ENCODE measurements at regions of chr22 and their contacts with region 1.

Region 1: GRCh38 chr22:19730655-19731360 is 7.5 kb downstream of the GP1BB start:
- DNase-seq: no peak
- ATAC-seq: peak; percentile 97
- H3K4me3 ChIP-seq: peak overlapping the region; percentile 29; the same call in 1 of the 2 replicates
- H3K27ac ChIP-seq: no peak overlapping the region
- H3K4me1 ChIP-seq: no peaks in the 10 kb centered on the region
- H3K27me3 ChIP-seq: no peaks in the 10 kb centered on the region
- CTCF ChIP-seq: peak; percentile 85 to 96 (median 89)
- EP300 ChIP-seq: no peak
- POLR2A ChIP-seq: no peak
- RAD21 ChIP-seq: peak; percentile 96

Region 2: DNA sequence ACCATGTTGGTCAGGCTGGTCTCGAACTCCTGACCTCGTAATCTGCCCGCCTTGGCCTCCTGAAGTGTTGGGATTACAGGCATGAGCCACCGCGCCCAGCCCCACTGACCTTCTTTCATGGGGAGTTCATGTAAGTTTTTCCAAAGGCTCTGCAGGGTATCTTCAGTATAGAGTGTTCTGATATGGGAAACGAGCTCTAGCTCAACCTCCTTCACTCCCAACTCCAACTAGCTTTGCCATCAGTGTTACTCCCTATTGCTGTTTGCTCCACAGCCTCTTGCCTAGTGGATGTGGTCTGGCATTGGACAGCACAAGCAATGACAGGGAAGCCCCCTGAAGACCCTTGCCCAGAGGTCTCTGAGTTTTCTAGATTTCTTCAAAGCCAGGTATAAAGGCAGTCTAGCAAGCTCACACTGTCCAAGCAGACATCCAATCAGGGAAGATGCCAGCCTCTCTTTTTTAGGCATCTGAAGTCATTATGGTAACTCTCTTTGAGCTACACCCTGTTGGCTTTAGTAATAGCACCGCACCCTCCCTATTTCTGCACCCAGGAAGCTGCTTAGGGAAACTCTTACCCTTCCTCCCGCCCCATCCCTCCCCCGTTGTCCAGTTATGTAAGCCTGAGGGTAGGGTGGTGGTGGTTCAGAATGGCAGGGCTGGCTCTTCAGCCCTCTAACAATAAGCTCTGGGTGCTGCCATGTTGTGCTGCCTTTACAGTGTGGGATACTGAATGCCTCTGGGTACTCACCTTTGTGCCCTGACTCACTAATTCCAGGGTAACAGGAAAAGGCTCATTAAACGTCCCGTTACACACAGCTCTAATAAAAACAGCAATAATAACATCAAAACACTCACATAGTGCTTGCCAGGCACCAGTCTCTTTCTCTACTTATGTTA is 165.2 kb before region 1 on chr22:
- CTCF ChIA-PET with region 1: no interaction called
- POLR2A ChIA-PET with region 1: no interaction called
- RAD21 ChIA-PET with region 1: no interaction called
- SMC1A ChIA-PET with region 1: no interaction called
- in situ Hi-C with region 1: no loop called
- intact Hi-C with region 1: no loop called
- DNase-seq: no peak
- ATAC-seq: no peak
- H3K4me3 ChIP-seq: no peak overlapping the region
- H3K27ac ChIP-seq: no peak overlapping the region
- H3K4me1 ChIP-seq: no peaks in the 10 kb centered on the region
- H3K27me3 ChIP-seq: no peaks in the 10 kb centered on the region
- CTCF ChIP-seq: no peak
- EP300 ChIP-seq: no peak
- POLR2A ChIP-seq: no peak
- RAD21 ChIP-seq: no peak

Region 3: DNA sequence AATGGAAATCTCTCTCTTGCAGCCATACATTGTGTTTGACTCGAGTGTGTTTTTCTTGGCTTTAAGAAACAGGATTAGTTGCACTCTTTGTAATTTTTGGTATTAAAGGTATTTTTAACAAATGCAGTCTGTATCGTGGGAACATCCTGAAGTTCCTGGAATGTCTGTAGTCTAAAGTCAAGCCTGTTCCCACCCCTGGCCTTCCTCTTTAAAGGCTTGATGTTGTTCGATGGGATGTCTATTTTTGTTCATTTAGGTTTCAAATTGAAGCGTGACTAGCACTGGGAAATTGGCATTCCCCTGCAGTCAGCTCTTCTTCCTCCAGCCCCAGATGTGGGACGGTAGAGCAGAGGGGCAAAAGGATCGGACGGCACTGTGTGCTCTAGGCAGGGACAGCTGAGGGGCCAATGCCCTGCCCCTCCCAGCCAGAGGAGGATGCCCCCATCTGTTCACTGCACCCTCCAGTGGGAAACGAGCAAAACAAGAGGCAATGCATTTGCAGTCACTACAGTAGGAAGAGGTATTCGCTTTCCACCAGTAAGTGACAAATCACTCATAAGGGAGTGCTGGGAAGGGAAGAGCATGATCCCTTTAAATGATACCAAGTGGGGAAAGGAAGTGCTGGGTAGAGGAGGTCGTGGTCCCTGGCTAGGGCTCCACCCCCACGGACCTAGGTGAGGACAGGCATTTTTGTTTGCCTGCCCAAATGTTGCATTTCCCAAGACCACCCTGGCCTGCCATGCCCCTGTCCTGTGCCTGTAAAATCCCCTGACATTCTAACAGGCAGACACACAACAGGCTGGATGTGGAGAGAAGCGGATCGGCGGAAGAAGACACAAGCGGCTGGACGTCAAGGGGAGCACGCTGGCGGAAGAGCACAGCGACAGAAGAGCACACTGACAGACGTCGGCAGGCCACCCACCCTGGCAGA is 63.9 kb before region 1 on chr22:
- CTCF ChIA-PET with region 1: no interaction called
- POLR2A ChIA-PET with region 1: no interaction called
- RAD21 ChIA-PET with region 1: no interaction called
- SMC1A ChIA-PET with region 1: no interaction called
- in situ Hi-C with region 1: no loop called
- intact Hi-C with region 1: no loop called
- DNase-seq: no peak
- ATAC-seq: no peak
- H3K4me3 ChIP-seq: no peak overlapping the region
- H3K27ac ChIP-seq: no peak overlapping the region
- H3K4me1 ChIP-seq: no peaks in the 10 kb centered on the region
- H3K27me3 ChIP-seq: no peaks in the 10 kb centered on the region; a peak in 2 of 4 replicates
- CTCF ChIP-seq: no peak
- EP300 ChIP-seq: no peak
- POLR2A ChIP-seq: no peak
- RAD21 ChIP-seq: no peak

Region 4: DNA sequence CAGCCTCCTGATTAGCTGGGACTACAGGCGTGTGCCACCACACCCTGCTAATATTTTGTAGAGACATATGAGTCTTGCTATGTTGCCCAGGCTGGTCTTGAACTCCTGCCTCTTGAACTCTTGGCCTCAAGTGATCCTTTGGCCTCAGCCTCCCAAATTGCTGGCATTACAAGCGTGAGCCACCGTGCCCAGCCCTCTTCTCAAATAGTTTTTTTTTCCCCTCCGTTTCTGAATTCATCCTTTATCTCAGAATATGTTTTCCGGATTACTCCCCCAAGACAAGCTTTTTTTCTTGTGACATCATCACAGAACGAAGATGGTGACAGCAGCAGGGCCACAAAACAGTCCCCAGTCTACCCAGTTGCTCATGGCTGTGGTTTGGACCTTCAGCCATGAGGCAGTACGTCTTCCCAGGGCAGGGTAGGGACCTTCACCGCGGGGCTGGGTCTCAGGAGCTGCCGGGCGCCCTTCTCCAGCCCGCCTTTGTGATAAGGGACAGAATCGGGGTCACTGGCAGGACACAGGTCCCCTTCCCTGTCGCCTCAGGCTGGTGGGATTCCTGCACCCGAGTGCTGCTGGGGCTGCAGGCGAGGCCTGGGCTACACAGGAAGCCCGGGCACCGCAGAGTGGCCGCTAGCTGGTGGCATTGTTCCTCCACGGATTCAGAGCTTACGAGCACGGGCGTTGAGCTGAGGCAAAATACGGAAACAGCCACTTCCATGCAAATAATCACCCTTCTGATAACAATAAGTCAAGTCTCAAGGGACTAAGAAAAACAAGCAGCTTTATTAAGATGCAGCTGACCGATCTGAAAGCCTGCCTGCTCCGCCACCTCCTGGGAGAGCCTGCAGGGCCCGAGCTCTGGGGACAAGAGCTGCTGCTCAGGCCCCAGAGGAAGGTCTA is 41.9 kb after region 1 on chr22:
- CTCF ChIA-PET with region 1: interaction called, 9 read pairs
- POLR2A ChIA-PET with region 1: no interaction called
- RAD21 ChIA-PET with region 1: interaction called, 10 read pairs
- SMC1A ChIA-PET with region 1: interaction called, 5 read pairs
- in situ Hi-C with region 1: no loop called
- intact Hi-C with region 1: no loop called
- DNase-seq: peak; percentile 61
- ATAC-seq: peak; percentile 90
- H3K4me3 ChIP-seq: no peak overlapping the region
- H3K27ac ChIP-seq: no peak overlapping the region
- H3K4me1 ChIP-seq: peaks cover 9% of the 10 kb centered on the region
- H3K27me3 ChIP-seq: peaks cover 0 to 5% of the 10 kb centered on the region in 2 experiments; a peak in 3 of 4 replicates
- CTCF ChIP-seq: peak; percentile 15 to 42 (median 26); a peak in 3 of 6 replicates
- EP300 ChIP-seq: peak in 1 of 2 experiments; percentile 37; a peak in 1 of 4 replicates
- POLR2A ChIP-seq: no peak
- RAD21 ChIP-seq: no peak

Region 5: DNA sequence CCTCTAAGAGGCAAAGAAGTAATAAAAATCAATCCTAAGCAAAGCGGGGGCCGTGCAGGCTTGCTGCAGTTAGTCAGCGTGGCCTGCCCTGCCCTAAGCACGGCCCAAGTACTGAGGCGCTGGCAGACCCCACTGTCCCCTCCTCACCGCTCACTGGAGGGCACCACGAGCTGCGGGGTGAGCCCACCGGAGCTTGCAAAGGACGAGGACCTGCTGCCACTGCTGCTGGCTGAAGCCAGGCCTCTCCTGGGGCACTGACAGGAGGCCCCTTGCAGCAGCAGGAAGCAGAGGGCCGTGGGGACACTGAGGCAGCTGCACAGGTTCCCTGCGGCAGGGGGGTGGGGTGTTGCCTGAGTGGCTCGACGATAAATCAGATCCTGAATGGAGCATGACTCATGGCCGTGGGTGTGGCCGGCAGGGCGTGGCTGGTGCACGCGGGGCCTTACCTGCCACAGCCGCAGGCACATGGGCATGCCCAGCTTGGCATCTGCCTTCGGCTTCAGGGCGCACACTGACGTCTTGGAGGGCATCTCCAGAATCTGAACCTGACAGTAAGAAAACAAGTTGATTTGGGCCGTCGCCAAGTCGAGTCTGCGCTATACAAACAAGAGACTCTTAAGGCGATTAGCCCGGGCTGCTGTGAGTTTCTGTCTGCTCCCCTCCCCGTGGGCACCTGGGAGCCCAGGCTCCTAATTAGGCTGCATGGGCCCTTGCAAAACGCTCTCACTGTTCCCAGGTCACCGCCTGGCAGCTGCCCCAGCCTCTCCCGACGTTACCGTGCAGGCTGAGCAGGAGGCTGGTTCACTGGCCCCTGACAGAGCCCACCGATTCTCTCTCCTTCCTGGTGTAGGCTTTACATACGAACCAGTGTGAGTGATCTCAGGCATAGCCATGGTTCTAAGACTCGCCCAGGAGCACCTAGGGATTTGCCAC is 75.7 kb after region 1 on chr22:
- CTCF ChIA-PET with region 1: no interaction called
- POLR2A ChIA-PET with region 1: no interaction called
- RAD21 ChIA-PET with region 1: no interaction called
- SMC1A ChIA-PET with region 1: no interaction called
- in situ Hi-C with region 1: no loop called
- intact Hi-C with region 1: no loop called
- DNase-seq: no peak
- ATAC-seq: no peak
- H3K4me3 ChIP-seq: no peak overlapping the region
- H3K27ac ChIP-seq: no peak overlapping the region
- H3K4me1 ChIP-seq: no peaks in the 10 kb centered on the region
- H3K27me3 ChIP-seq: no peaks in the 10 kb centered on the region
- CTCF ChIP-seq: no peak
- EP300 ChIP-seq: no peak
- POLR2A ChIP-seq: no peak
- RAD21 ChIP-seq: no peak

Region 6: GRCh38 chr22:19909350-19910179 is 178.8 kb after region 1 on chr22:
- CTCF ChIA-PET with region 1: interaction called, 94 read pairs
- POLR2A ChIA-PET with region 1: no interaction called
- RAD21 ChIA-PET with region 1: interaction called, 70 read pairs
- SMC1A ChIA-PET with region 1: interaction called, 28 read pairs
- in situ Hi-C with region 1: no loop called
- intact Hi-C with region 1: loop called (anchors 1 kb)
- DNase-seq: peak; percentile 32
- ATAC-seq: peak; percentile 99
- H3K4me3 ChIP-seq: no peak overlapping the region
- H3K27ac ChIP-seq: no peak overlapping the region
- H3K4me1 ChIP-seq: no peaks in the 10 kb centered on the region; the same call in 1 of the 2 replicates
- H3K27me3 ChIP-seq: no peaks in the 10 kb centered on the region
- CTCF ChIP-seq: peak; percentile 85 to 93 (median 92)
- EP300 ChIP-seq: no peak
- POLR2A ChIP-seq: no peak
- RAD21 ChIP-seq: peak; percentile 92

Region 7: GRCh38 chr22:19918332-19919106 is 187.7 kb after region 1 on chr22:
- CTCF ChIA-PET with region 1: interaction called, 94 read pairs
- POLR2A ChIA-PET with region 1: no interaction called
- RAD21 ChIA-PET with region 1: interaction called, 70 read pairs
- SMC1A ChIA-PET with region 1: interaction called, 7 read pairs
- in situ Hi-C with region 1: loop called (anchors 5 kb)
- intact Hi-C with region 1: no loop called
- DNase-seq: no peak
- ATAC-seq: no peak
- H3K4me3 ChIP-seq: no peak overlapping the region
- H3K27ac ChIP-seq: no peak overlapping the region
- H3K4me1 ChIP-seq: no peaks in the 10 kb centered on the region
- H3K27me3 ChIP-seq: no peaks in the 10 kb centered on the region
- CTCF ChIP-seq: no peak
- EP300 ChIP-seq: no peak
- POLR2A ChIP-seq: no peak
- RAD21 ChIP-seq: no peak

Region 8: GRCh38 chr22:19948057-19948760 is 217.4 kb after region 1 on chr22:
- CTCF ChIA-PET with region 1: interaction called, 10 read pairs
- POLR2A ChIA-PET with region 1: no interaction called
- RAD21 ChIA-PET with region 1: interaction called, 12 read pairs
- SMC1A ChIA-PET with region 1: interaction called, 6 read pairs
- in situ Hi-C with region 1: no loop called
- intact Hi-C with region 1: no loop called
- DNase-seq: no peak
- ATAC-seq: no peak
- H3K4me3 ChIP-seq: no peak overlapping the region
- H3K27ac ChIP-seq: no peak overlapping the region
- H3K4me1 ChIP-seq: peaks cover 6% of the 10 kb centered on the region; the same call in 1 of the 2 replicates
- H3K27me3 ChIP-seq: no peaks in the 10 kb centered on the region
- CTCF ChIP-seq: no peak
- EP300 ChIP-seq: no peak
- POLR2A ChIP-seq: no peak
- RAD21 ChIP-seq: no peak

Region 9: GRCh38 chr22:19959043-19959586 is 228.3 kb after region 1 on chr22:
- CTCF ChIA-PET with region 1: interaction called, 10 read pairs
- POLR2A ChIA-PET with region 1: no interaction called
- RAD21 ChIA-PET with region 1: interaction called, 7 read pairs
- SMC1A ChIA-PET with region 1: no interaction called
- in situ Hi-C with region 1: no loop called
- intact Hi-C with region 1: no loop called
- DNase-seq: no peak
- ATAC-seq: no peak
- H3K4me3 ChIP-seq: no peak overlapping the region
- H3K27ac ChIP-seq: no peak overlapping the region
- H3K4me1 ChIP-seq: no peaks in the 10 kb centered on the region; the same call in 1 of the 2 replicates
- H3K27me3 ChIP-seq: no peaks in the 10 kb centered on the region
- CTCF ChIP-seq: no peak
- EP300 ChIP-seq: no peak
- POLR2A ChIP-seq: no peak
- RAD21 ChIP-seq: no peak